Cardiac septum (tissue), 1 donor: ENCODE measurements at regions of chr4 and their contacts with region 1.

Region 1: GRCh38 chr4:102826890-102827673 is at the start of gene UBE2D3:
- DNase-seq: peak; percentile 96
- total RNA-seq, gene UBE2D3: 239 TPM

Region 2: DNA sequence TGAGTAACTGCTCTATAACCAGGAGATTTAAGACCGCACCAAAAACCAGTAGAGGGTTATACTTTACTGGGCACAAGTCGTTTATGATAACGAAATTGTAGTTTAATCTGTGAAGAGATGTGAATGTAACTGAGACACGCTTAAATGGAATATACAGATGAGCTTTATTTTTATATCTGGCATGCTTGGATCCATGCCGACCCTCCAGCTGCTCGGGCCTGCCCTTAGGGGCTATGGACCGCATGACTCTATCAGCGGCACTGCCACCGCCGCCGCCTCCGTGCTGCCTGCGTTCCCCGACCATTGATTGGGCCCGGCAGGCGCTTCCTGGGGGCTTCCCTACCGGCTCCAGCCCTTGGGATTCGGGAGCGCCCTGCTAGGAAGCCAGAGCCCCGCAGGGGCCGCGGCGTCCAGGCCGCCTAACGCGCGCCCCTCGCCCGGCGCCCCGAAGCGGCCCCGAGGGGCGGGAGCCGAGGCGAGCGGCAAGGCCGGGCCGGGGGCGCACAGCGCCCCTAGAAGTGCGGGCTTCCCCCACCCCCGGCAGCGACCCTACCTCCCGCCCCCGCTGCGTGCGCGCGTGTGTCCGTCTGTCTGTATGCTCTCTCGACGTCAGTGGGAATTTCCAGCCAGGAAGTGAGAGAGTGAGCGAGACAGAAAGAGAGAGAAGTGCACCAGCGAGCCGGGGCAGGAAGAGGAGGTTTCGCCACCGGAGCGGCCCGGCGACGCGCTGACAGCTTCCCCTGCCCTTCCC is 326.2 kb before region 1 on chr4 and contains the start of gene NFKB1:
- intact Hi-C with region 1: loop called (anchors 2 kb)
- DNase-seq: peak; percentile 88
- total RNA-seq, gene NFKB1: 28.7 TPM

Region 3: GRCh38 chr4:102640669-102641068 is 186.4 kb before region 1 on chr4:
- intact Hi-C with region 1: loop called (anchors 5 kb)
- DNase-seq: no peak

Region 4: DNA sequence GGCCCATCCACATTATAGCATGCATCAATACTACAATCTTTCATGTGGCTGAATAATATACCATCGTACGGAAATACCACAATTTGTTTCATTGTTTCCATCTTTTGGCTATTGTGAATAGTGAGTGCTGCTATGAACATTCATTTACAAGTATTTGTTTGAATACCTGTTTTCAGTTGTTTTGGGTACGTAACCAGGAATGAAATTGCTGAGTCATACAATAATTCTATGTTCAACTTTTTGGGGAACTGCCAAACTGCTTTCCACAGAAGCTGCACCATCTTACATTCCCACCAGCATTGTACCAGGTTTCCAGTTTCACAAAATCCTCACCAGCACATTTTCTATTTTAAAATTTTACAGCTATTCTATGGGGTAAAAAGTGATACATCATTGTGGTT is 37.8 kb before region 1 on chr4:
- intact Hi-C with region 1: no loop called
- DNase-seq: no peak

Region 5: GRCh38 chr4:102868781-102869568 is 41.9 kb after region 1 on chr4 and contains the start of gene CISD2:
- intact Hi-C with region 1: loop called (anchors 1 kb)
- DNase-seq: peak; percentile 97
- total RNA-seq, gene CISD2: 15.8 TPM

Region 6: DNA sequence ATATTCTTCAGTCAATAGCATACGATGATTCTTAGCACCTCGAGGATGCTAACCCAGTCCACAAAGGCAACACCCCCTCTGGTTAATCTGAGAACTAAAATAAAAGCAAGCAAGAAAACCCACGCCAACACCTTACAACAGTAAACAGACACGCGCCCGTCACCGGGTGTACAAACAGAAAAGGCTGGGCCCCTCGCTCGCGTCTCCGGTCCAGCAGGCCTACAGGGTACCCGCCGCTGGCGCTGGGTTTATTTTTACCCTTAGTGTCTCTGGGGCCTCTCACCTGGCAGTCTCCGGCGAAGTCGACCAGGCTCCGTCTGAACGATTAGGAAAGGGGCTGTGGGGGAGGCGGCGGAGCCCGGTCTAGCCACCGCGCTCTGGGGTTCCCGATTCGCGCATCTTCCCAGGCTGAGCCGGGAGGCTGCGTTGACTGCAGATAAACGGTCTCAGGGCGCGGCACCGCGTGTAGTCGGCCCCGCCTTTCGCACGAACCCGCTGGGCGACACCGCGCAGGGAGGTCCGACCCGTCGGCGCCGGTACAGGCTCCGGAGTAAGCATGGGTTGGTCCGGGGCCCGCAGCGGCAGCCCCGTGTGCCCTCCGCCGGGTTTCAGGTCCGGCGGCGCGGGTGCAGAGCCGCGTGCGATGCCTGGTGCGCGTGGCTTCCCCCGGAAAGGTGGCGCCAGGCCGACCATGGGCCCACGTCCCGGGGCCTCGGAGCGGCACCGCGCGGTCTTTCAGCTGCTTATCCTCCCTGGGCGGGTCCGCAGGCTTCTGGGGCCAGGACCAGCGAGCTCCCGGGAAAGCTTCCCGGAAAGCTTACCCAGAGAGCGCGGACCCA is 249.0 kb after region 1 on chr4:
- intact Hi-C with region 1: loop called (anchors 5 kb)
- DNase-seq: peak; percentile 86